ENCODE measurements at regions of chr15 and their contacts with region 1.

Region 1: DNA sequence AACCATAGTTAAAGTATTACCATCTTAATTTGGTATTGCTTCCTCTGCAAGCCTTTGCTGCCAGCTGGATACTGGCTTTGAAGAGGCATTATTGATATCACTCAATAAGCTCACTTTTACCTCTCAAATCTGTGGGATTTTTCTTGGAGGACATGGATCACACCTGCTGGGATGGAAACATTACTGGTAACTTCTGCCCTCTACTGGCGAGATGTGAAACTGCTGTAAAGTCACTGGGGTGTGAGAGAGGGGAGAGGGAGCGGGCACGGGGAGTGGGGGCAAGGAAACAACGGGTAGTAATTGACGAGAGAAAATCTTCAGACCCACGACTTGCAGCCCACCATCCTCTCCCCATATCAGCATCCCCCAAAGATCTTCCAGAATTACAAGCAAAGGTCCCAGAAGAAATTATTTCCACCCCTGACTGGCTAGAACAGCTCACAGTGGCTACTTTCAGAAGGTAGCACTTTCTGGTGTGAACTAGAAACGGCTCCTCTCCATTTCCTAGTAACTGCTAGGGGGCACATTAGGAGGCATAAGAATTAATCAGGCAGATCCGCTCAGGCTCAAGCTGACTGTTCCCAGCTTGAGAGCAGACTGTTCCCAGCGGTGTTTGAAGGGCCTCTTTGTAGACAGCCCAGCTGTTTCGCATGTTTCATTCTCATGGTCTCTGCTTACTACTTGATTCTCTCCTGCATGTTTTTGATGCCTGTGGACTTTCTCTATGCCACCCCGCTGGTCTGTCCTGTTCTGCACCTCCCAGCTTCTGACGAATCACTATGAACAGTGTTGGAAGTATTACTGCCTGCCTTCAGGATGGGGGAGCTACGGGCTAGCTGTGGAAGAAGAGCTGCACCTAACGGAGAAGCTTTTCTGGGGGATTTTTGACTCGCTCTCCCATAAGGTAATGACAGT is 230.4 kb upstream of the CHRM5 start:
- DNase-seq: no peak
- H3K4me3 ChIP-seq: no peak overlapping the region
- CTCF ChIP-seq: peak; percentile 79

Region 2: GRCh38 chr15:33201491-33202231 is 536.3 kb before region 1 on chr15:
- CTCF ChIA-PET with region 1: no interaction called
- POLR2A ChIA-PET with region 1: no interaction called
- DNase-seq: no peak
- H3K4me3 ChIP-seq: no peak overlapping the region
- CTCF ChIP-seq: no peak

Region 3: DNA sequence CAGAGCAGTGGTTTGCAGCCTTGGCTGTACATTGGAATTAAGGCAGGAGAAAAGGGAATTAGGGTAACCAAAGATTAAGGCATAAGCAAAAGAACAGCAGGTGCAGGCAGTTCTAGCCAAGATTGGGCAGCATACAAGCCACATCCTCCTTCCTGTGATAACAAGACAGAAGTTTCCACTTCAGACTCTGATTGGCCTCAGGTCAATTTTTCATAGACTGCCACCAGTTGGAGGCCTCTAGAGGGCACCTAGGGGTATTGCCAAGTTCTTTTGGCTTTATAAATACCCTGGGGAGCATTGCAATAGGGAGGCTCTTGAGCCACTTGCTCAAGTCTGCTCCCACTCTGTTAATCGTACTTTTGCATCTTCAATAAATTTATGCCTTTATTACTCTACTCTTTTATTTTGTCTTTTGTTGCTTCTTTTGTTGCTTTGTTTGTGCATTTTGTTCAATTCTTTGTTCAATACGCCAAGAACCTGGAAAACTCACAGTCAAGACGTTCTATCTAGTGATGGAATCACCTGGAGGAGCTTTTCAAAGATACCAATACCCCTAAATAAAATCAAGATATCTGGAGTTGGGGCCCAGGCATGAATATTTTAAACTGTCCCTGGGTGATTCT is 511.3 kb before region 1 on chr15:
- CTCF ChIA-PET with region 1: interaction called, 13 read pairs
- POLR2A ChIA-PET with region 1: no interaction called
- DNase-seq: no peak
- H3K4me3 ChIP-seq: no peak overlapping the region
- CTCF ChIP-seq: no peak

Region 4: GRCh38 chr15:33292717-33293307 is 445.1 kb before region 1 on chr15:
- CTCF ChIA-PET with region 1: interaction called, 28 read pairs
- POLR2A ChIA-PET with region 1: no interaction called
- DNase-seq: no peak
- H3K4me3 ChIP-seq: no peak overlapping the region
- CTCF ChIP-seq: peak; percentile 62

Region 5: DNA sequence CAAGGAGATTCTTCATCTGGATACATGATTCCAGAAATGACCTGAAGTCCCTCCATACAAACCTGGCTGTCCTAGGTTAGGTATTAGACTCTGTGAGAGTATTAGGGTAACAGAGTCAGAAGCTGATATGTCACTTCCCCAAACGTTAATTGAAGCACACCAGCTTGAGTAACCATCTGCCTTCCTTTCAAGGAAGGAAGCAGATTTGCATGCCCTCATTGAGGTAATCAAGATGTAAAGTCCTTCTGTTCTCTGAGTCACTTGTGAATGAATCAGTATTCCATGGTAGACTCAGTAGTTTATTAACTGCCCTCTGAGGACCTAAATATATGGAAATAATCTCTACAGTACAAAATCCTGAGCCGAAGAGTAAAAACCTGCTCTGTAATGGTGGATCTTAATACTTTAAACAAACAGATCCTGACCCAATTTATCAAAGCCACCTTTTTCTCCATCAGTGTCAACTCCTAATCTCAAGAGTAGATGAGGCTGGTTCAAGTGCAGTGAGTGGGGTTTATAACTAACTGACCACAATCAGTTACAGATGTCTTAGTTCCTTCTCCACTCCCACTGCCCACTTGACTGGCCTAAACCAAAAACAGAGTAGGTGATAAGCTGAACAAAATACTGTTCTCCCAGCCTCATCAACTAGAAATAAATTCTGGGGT is 15.8 kb before region 1 on chr15:
- CTCF ChIA-PET with region 1: interaction called, 114 read pairs
- POLR2A ChIA-PET with region 1: no interaction called
- DNase-seq: no peak
- H3K4me3 ChIP-seq: no peak overlapping the region
- CTCF ChIP-seq: no peak

Region 6: GRCh38 chr15:33963831-33964664 is 226.1 kb after region 1 on chr15:
- CTCF ChIA-PET with region 1: interaction called, 59 read pairs
- POLR2A ChIA-PET with region 1: no interaction called
- DNase-seq: no peak
- H3K4me3 ChIP-seq: no peak overlapping the region
- CTCF ChIP-seq: peak; percentile 46

Region 7: DNA sequence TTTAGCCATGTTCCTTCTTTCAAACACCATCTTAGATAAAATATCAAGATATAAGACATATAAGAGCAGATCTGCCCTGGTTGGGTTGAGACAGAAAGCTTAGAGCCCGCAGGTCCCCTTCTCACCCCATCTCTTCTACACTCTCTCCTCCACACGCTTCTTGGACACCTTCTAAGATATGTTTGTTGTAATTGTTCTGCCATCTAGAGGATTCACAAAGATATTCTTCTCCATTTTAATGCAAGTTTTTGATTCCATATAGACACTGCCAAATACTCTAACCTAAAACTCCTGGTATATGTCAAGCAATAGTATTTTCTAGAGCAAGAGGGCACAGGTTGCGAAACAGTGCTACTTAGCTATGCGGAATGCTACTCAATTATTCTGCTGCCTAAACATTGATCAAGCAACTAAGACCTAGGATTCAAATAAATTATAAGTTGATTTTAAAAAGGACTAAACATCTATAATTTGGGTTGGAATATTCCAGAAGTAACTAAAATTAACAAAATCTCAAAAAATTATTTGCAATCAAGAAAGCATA is 237.2 kb after region 1 on chr15:
- CTCF ChIA-PET with region 1: interaction called, 58 read pairs
- POLR2A ChIA-PET with region 1: no interaction called
- DNase-seq: no peak
- H3K4me3 ChIP-seq: no peak overlapping the region
- CTCF ChIP-seq: no peak

Region 8: DNA sequence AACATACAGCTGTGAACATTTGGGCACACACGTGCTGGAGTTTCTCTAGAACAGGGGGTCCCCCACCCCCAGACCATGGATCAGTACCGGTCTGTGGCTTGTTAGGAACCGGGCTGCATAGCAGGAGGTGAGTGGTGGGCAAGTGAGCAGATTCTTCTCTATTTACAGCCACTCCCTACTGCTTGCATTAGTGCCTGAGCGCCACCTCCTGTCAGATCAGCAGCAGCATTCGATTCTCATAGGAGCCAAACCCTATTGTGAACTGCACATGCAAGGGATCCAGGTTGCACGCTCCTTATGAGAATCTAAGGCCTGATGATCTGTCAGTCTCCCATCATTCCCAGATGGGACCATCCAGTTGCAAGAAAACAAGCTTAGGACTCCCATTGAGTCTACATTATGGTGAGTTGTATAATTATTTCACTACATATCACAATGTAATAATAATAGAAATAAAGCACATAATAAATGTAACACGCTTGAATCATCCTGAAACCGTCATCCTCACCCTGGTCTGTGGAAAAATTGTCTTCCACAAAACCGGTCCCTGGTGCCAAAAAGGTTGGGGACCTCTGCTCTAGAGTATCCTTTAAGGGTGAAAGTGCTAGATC is 256.2 kb after region 1 on chr15:
- CTCF ChIA-PET with region 1: interaction called, 88 read pairs
- POLR2A ChIA-PET with region 1: no interaction called
- DNase-seq: no peak
- H3K4me3 ChIP-seq: no peak overlapping the region
- CTCF ChIP-seq: peak; percentile 64